H1 (cell line): ENCODE measurements at regions of chr17 and their contacts with region 1.

Region 1: DNA sequence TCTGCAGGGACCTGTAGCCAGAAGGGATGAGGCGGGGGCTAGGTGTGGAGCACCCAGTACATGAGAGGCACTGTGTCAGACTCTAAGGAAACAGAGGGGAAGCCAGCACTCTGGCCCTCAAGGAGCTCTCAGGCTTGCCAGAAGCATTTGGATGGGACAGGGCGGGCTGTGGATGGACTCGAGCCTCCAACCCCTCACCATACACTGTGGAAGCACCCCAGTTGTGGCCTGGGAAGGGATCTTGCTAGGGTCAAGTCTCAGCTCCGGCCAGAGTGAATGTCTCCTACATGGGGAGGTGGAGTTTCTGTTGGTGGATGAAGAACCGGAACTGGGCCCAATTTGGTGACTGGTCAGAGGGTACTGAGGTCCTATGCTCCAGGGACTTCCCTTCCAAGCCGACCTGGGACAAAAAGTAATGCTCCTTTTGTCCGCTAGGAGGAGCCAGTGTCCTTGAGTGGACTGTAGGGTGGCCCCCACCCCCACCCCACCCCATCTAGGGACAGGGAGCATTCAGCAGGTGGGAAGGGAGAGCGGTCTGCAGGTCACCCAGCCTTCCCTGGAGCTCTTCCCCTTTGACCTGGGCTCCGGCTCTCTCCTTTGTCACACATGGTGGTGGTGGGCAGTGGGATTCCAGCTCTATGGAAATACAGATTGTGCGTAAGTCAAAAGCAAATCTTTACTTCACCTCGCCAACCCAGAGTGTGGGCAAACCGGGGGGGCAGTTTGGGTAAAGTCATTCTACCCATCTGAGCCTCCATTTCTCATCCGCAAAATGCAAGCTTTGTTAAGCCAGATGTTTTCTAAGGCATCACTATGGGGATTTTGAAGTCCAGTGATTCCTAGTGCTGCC is 20.4 kb upstream of the PHB1 start:
- DNase-seq: peak; percentile 38 to 87
- H3K4me3 ChIP-seq: no peak overlapping the region
- H3K27ac ChIP-seq: no peak overlapping the region
- H3K4me1 ChIP-seq: peaks cover 0 to 26% (median 12%) of the 10 kb centered on the region in 4 experiments; a peak in 6 of 7 replicates
- H3K27me3 ChIP-seq: peaks cover 0 to 15% (median 4%) of the 10 kb centered on the region in 4 experiments; a peak in 3 of 7 replicates
- CTCF ChIP-seq: peak; percentile 78 to 86 (median 82)
- EP300 ChIP-seq: no peak; a peak in 1 of 3 replicates
- POLR2A ChIP-seq: no peak
- RAD21 ChIP-seq: peak; percentile 88 to 90

Region 2: DNA sequence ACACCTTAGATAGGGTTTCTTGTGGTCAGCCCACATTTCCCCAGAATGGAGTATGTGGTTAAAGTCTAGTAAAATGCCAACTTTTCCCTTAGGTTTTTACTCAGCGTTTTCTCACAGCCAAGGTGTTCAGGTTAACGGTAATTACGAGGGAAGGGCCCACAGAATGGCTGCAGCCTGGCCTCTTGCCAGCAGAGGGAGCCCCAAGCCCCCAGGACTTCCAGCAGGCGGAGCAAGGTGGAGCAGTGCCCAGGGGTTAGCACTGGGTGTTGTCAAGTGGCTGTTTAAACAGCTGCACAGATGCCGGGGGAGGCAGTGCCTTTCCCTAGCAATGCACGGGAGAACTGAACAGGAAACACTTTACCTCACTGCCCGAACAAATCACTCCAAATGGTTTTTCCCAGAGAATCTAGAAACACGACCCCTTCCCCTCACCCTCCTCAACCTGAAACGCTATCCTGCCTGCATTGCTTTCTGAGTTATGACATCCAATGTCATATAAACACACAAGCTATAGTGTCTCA is 27.0 kb before region 1 on chr17:
- CTCF ChIA-PET with region 1: interaction called, 43 read pairs
- POLR2A ChIA-PET with region 1: no interaction called
- DNase-seq: peak; percentile 70 to 97
- H3K4me3 ChIP-seq: no peak overlapping the region
- H3K27ac ChIP-seq: no peak overlapping the region
- H3K4me1 ChIP-seq: no peaks in the 10 kb centered on the region
- H3K27me3 ChIP-seq: no peaks in the 10 kb centered on the region
- CTCF ChIP-seq: peak; percentile 95 to 99 (median 99)
- EP300 ChIP-seq: 0 out of 3 replicates have a peak, but pooled peaks of 1 of the 2 experiments have one; percentile 7
- POLR2A ChIP-seq: no peak
- RAD21 ChIP-seq: peak; percentile 95 to 98

Region 3: GRCh38 chr17:49425004-49425286 is 10.1 kb before region 1 on chr17:
- CTCF ChIA-PET with region 1: interaction called, 44 read pairs
- POLR2A ChIA-PET with region 1: no interaction called
- DNase-seq: no peak
- H3K4me3 ChIP-seq: no peak overlapping the region
- H3K27ac ChIP-seq: no peak overlapping the region
- H3K4me1 ChIP-seq: no peaks in the 10 kb centered on the region
- H3K27me3 ChIP-seq: no peaks in the 10 kb centered on the region
- CTCF ChIP-seq: no peak
- EP300 ChIP-seq: no peak
- POLR2A ChIP-seq: no peak
- RAD21 ChIP-seq: no peak

Region 4: GRCh38 chr17:49471089-49471683 is 36.1 kb after region 1 on chr17:
- CTCF ChIA-PET with region 1: interaction called, 37 read pairs
- POLR2A ChIA-PET with region 1: interaction called, 3 read pairs
- DNase-seq: no peak
- H3K4me3 ChIP-seq: peak overlapping the region in 1 of 4 experiments; percentile 73; a peak in 3 of 8 replicates
- H3K27ac ChIP-seq: no peak overlapping the region
- H3K4me1 ChIP-seq: peaks cover 7 to 16% (median 12%) of the 10 kb centered on the region in 4 experiments
- H3K27me3 ChIP-seq: peaks cover 3 to 35% (median 34%) of the 10 kb centered on the region in 4 experiments
- CTCF ChIP-seq: peak in 1 of 3 experiments; percentile 2; a peak in 1 of 4 replicates
- EP300 ChIP-seq: no peak
- POLR2A ChIP-seq: no peak
- RAD21 ChIP-seq: no peak; a peak in 1 of 4 replicates

Region 5: GRCh38 chr17:49496183-49496866 is 61.3 kb after region 1 on chr17:
- CTCF ChIA-PET with region 1: interaction called, 33 read pairs
- POLR2A ChIA-PET with region 1: interaction called, 10 read pairs
- DNase-seq: peak in 1 of 2 experiments; percentile 98
- H3K4me3 ChIP-seq: peak overlapping the region; percentile 57 to 79 (median 72)
- H3K27ac ChIP-seq: no peak overlapping the region
- H3K4me1 ChIP-seq: peaks cover 3 to 11% (median 7%) of the 10 kb centered on the region in 4 experiments
- H3K27me3 ChIP-seq: peaks cover 12 to 47% (median 38%) of the 10 kb centered on the region in 4 experiments
- CTCF ChIP-seq: peak; percentile 81 to 94 (median 85)
- EP300 ChIP-seq: peak in 1 of 2 experiments; percentile 20; a peak in 1 of 3 replicates
- POLR2A ChIP-seq: no peak
- RAD21 ChIP-seq: peak; percentile 42 to 67

Region 6: DNA sequence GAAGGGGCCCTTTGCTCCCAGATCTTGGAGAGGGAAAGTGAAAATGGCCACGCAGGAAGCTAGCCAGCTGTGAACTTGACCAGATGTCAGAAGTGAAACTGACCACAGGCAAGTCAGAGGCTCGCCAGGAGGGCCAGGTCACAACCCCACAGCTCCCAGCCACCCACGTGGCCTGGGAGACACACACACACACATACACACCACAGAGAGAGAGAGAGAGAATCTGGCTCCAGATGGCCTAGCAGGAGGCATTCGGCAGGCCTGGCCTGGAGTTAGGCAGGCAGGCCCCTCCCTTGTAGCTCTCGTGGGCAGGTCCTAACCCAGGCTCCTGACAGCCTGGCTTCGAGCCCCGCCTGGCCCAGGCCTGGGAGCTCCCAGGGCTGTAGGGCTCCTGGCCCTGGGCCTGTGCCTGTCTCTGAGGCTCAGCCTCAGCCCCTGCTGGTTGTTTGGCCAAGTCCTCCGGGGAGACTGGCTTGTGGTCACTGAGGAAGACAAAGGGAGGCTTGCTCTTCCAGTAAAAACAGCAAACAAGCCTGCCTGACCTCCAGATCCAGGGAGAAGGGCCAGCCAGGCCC is 80.2 kb after region 1 on chr17:
- CTCF ChIA-PET with region 1: interaction called, 105 read pairs
- POLR2A ChIA-PET with region 1: interaction called, 3 read pairs
- DNase-seq: peak in 1 of 2 experiments; percentile 70
- H3K4me3 ChIP-seq: no peak overlapping the region
- H3K27ac ChIP-seq: no peak overlapping the region
- H3K4me1 ChIP-seq: peaks cover 16 to 41% (median 22%) of the 10 kb centered on the region in 4 experiments
- H3K27me3 ChIP-seq: no peaks in the 10 kb centered on the region
- CTCF ChIP-seq: no peak; a peak in 1 of 4 replicates
- EP300 ChIP-seq: no peak
- POLR2A ChIP-seq: no peak; a peak in 1 of 3 replicates
- RAD21 ChIP-seq: peak; percentile 7 to 33; a peak in 3 of 4 replicates

Region 7: GRCh38 chr17:49610883-49611531 is 176.0 kb after region 1 on chr17:
- CTCF ChIA-PET with region 1: no interaction called
- POLR2A ChIA-PET with region 1: no interaction called
- DNase-seq: no peak
- H3K4me3 ChIP-seq: no peak overlapping the region
- H3K27ac ChIP-seq: no peak overlapping the region
- H3K4me1 ChIP-seq: no peaks in the 10 kb centered on the region
- H3K27me3 ChIP-seq: no peaks in the 10 kb centered on the region
- CTCF ChIP-seq: no peak
- EP300 ChIP-seq: no peak
- POLR2A ChIP-seq: no peak
- RAD21 ChIP-seq: no peak